Left ventricle myocardium inferior (tissue), 1 donor: ENCODE measurements at regions of chr19 and their contacts with region 1.

Region 1: DNA sequence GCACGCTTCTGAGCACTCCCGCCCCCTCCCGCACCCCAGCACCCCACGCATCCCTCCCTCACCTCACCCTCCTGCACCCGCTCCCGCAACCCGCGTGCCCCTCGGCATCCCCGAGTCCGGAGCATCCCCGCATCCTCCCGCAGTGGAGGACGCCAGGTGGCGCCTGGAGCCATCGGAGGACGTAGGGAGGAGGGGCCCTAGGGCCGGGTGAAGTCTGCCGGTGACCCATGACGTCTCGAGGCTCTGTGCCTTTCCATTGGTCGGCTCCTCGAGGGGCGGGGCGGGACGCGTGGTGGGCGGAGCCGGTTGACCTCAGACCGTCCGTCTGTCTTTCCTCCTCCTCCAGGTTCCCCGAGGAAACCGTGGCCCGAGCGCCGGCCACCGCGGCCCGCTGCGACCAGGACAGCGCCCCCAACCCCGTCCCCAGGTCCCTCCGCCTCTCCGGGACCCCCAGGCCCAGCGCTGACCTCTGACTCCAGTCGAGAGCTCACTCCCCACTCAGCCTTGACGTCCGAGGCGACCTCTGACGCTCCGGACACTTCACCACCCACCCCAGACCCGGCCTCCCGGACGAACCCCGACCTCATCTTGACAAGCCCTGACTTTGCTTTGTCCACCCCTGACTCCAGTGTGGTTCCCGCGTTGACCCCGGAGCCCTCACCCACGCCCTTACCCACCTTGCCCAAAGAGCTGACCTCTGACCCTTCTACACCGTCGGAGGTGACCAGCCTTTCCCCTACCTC is 19.9 kb downstream of the SBK2 start:
- DNase-seq: peak; percentile 94
- H3K4me3 ChIP-seq: peak overlapping the region; percentile 69
- H3K27ac ChIP-seq: peak overlapping the region; percentile 98
- H3K4me1 ChIP-seq: peaks cover 20% of the 10 kb centered on the region
- H3K27me3 ChIP-seq: peaks cover 5% of the 10 kb centered on the region
- CTCF ChIP-seq: peak; percentile 86

Region 2: DNA sequence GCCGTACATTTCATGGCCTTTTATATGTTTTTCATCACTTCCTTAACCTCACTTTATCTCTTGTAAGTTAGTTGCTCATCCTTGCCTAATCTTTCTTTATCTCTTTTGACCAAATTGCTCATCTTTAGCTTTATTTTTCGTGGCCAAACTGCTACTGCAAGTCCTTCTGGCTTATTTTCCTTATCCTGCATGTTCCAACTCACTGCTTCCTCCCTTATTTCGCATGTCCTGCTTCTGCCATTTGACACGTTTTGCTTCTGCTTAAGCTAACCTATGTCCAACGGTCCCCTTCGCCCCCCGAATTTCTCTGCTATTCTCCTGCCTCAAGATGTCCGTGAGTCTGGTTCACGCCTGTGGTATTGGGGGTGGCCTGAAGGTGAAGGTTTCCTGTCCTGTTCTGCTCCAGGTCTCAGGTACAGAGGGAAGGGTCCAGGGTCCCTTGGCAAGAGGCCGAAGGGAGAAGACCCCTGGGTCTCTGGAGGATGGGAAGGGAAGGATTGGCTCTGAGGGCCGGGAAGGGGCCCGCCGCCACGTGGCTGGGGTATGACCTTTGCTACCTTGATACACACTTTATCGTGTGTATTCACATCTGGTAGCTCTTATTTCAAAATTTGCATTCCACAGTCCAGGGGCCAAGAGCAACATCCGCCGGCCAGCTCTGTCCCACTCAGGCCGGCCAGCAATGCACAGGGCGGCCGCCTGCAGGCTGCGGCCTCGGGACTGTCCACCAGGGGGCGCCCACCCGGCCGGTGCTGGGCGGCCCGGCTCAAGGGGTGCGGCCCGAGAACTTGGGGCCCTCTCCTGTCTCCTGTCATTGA is 49.6 kb before region 1 on chr19:
- intact Hi-C with region 1: no loop called
- DNase-seq: peak; percentile 69
- H3K4me3 ChIP-seq: no peak overlapping the region
- H3K27ac ChIP-seq: peak overlapping the region; percentile 23
- H3K4me1 ChIP-seq: peaks cover 12% of the 10 kb centered on the region
- H3K27me3 ChIP-seq: no peaks in the 10 kb centered on the region
- CTCF ChIP-seq: no peak

Region 3: GRCh38 chr19:55605207-55605636 is 88.2 kb after region 1 on chr19:
- intact Hi-C with region 1: loop called (anchors 5 kb)
- DNase-seq: peak; percentile 97
- H3K4me3 ChIP-seq: peak overlapping the region; percentile 89
- H3K27ac ChIP-seq: peak overlapping the region; percentile 98
- H3K4me1 ChIP-seq: peaks cover 58% of the 10 kb centered on the region
- H3K27me3 ChIP-seq: no peaks in the 10 kb centered on the region
- CTCF ChIP-seq: no peak